ENCODE measurements at regions of chr1 and their contacts with region 1.

Region 1: GRCh38 chr1:228212966-228213844 is 5.4 kb downstream of the OBSCN start:
- DNase-seq: peak; percentile 83
- H3K4me3 ChIP-seq: peak overlapping the region; percentile 32 to 80 (median 57)
- H3K27ac ChIP-seq: no peak overlapping the region
- H3K4me1 ChIP-seq: peaks cover 9% of the 10 kb centered on the region
- H3K27me3 ChIP-seq: no peaks in the 10 kb centered on the region
- CTCF ChIP-seq: peak; percentile 34 to 73

Region 2: DNA sequence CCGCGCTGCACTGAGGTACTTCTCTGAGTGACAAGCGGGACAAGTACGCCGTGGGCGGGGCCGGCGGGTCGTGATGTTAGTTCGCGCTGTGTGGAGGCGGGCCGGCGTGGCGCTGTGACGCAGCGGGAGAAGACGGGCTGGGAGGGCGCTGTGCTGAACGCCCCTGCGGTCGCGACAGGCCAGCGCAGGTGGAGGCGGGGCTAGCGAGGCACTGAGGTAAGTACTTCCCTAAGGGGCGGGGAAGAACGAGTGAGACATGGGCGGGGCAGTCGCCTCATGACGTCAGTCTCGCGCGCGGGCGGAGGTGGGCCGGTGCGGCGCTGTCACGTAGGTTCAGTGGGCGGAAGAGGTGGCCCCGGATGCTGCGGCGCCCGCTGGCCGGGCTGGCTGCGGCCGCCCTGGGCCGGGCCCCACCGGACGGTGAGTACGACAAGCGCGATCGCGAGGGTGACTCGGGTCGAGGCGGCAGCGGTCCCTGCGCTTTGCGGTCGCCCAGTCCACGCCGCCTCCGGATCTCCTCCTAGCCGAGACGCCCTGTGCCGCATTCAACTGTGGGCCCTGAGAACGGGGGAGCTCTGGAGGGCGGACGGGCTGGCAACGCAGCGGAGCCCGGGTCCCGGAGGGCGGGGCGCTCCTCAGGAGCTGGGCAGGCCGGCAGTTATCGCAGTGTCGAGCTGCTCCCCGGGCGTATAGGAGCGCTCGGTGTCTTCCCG is 73.1 kb before region 1 on chr1 and contains the start of gene GUK1:
- CTCF ChIA-PET with region 1: no interaction called
- dilution Hi-C with region 1: loop called (anchors 5 kb)
- in situ Hi-C with region 1: no loop called
- intact Hi-C with region 1: no loop called
- DNase-seq: peak; percentile 100
- H3K4me3 ChIP-seq: peak within 1 kb of the TSS; percentile 93 to 96 (median 96)
- H3K27ac ChIP-seq: peak within 1 kb of the TSS; percentile 84
- H3K4me1 ChIP-seq: peaks cover 30% of the 10 kb centered on the region
- H3K27me3 ChIP-seq: no peaks in the 10 kb centered on the region
- CTCF ChIP-seq: no peak
- total RNA-seq, gene GUK1: 229 to 242 TPM

Region 3: GRCh38 chr1:228180271-228180958 is 32.8 kb before region 1 on chr1:
- CTCF ChIA-PET with region 1: interaction called, 11 read pairs
- dilution Hi-C with region 1: no loop called
- in situ Hi-C with region 1: no loop called
- intact Hi-C with region 1: no loop called
- DNase-seq: no peak
- H3K4me3 ChIP-seq: no peak overlapping the region
- H3K27ac ChIP-seq: no peak overlapping the region
- H3K4me1 ChIP-seq: peaks cover 2% of the 10 kb centered on the region
- H3K27me3 ChIP-seq: no peaks in the 10 kb centered on the region
- CTCF ChIP-seq: peak in 1 of 2 donors; percentile 38

Region 4: GRCh38 chr1:228393248-228393699 is 180.1 kb after region 1 on chr1:
- CTCF ChIA-PET with region 1: interaction called, 14 read pairs
- dilution Hi-C with region 1: no loop called
- in situ Hi-C with region 1: no loop called
- intact Hi-C with region 1: loop called (anchors 1 kb)
- DNase-seq: no peak
- H3K4me3 ChIP-seq: no peak overlapping the region
- H3K27ac ChIP-seq: no peak overlapping the region
- H3K4me1 ChIP-seq: no peaks in the 10 kb centered on the region
- H3K27me3 ChIP-seq: no peaks in the 10 kb centered on the region
- CTCF ChIP-seq: peak; percentile 39 to 72

Region 5: DNA sequence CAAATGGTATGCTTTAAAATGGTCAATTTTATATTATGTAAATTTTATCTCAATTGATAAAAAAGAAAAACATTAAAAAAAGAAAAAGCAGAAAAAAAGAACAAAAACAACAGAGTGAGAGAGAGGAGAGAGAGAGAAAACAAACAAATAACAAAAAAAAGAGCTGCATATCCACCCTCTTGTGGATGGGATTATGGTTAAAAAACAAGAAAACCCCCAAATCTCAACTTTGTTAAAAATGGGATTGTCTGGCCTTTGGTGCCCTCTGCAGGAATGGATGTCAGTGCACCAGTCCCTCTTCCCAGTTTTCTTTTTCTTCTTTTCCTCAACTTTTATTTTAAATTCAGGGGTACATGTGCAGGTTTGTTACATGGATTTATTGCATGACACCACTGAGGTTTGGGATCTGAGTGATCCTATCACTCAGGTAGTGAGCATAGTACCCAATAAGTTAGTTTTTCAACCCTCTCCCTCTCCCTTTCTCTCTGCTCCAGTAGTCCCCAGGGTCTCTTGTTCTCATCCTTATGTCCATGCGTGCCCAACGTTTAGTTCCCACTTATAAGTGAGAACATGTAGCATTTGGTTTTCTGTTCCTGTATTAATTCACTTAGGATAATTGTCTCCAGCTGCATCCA is 302.1 kb after region 1 on chr1:
- CTCF ChIA-PET with region 1: no interaction called
- dilution Hi-C with region 1: no loop called
- in situ Hi-C with region 1: no loop called
- intact Hi-C with region 1: loop called (anchors 1 kb)
- DNase-seq: no peak
- H3K4me3 ChIP-seq: no peak overlapping the region
- H3K27ac ChIP-seq: no peak overlapping the region
- H3K4me1 ChIP-seq: no peaks in the 10 kb centered on the region
- H3K27me3 ChIP-seq: peaks cover 4% of the 10 kb centered on the region
- CTCF ChIP-seq: peak; percentile 54 to 67